ENCODE measurements at regions of chr6 and their contacts with region 1.

Region 1: DNA sequence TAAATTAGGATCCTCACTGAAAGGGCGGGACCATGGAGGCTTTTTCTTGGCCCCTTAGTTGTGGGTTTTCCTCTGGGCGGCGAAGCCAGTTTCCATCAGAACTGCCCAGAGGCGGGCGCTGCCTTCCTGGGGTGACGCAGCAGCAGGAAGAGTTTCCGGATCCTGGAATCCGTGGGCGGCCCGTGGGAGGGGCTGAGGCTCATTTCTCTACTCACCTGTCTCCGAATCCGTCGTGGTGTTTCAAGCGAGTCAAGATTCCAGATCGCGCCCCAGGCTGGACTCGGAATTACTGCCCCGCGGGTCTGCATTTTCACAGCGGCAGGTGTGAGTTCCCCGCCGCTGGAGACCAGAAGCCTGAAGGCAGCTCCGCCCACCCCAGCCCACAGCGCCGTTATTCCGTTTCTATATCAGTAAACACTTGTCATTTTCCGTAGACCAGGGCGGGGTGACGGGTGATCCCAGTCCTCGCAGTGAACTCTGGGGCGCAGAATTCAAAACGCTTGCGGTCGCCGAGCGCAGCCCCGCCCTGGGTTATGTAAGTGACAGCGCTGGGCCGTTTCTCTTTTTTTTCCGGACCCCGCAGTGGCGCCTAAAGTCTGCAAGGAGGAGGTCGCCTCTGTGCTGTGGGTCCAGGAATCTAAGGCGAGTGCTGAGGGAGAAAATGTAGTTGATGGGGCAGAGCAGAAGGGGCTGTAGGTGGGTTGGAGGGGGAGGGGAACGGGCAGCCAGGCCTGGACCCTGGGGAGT is 27.2 kb upstream of the POU5F1 start:
- DNase-seq: peak in 1 of 2 experiments; percentile 73
- H3K4me3 ChIP-seq: peak overlapping the region; percentile 43 to 74 (median 70)
- H3K27ac ChIP-seq: no peak overlapping the region
- H3K4me1 ChIP-seq: peaks cover 0 to 6% (median 5%) of the 10 kb centered on the region in 4 experiments; a peak in 6 of 7 replicates
- H3K27me3 ChIP-seq: no peaks in the 10 kb centered on the region
- CTCF ChIP-seq: peak in 1 of 3 experiments; percentile 3; a peak in 1 of 4 replicates
- EP300 ChIP-seq: no peak
- POLR2A ChIP-seq: no peak
- RAD21 ChIP-seq: peak; percentile 1 to 11; a peak in 1 of 4 replicates

Region 2: DNA sequence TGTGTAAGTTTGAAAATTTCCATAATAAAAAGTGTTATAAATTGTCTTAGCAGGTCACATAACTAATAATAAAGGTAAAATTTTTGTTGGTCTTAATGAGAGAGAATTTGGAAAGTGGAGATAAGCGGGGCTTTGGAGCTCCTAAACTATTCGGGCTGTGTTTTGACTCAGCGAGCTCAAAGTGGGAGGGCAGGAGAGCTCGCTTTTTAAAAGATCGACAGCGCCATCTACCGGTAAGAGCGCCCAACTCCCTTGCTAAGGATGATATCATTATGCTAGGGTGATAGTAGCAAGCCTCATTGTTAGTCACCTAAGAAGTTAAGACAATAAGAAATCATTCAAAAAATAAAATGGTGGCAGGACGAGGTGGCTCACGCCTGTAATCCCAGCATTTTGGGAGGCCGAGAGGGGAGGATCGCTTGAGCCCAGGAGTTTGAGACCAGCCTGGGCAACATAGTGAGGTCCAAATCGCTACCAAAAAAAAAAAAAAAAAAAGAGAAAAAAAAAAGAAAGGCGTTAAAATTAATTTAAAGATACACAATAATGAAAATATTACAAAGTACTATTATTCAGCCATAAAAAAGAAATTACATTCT is 110.1 kb before region 1 on chr6:
- CTCF ChIA-PET with region 1: interaction called, 12 read pairs
- POLR2A ChIA-PET with region 1: no interaction called
- DNase-seq: peak in 1 of 2 experiments; percentile 87
- H3K4me3 ChIP-seq: no peak overlapping the region
- H3K27ac ChIP-seq: no peak overlapping the region
- H3K4me1 ChIP-seq: no peaks in the 10 kb centered on the region; a peak in 1 of 7 replicates
- H3K27me3 ChIP-seq: no peaks in the 10 kb centered on the region
- CTCF ChIP-seq: peak; percentile 47 to 70 (median 67)
- EP300 ChIP-seq: no peak
- POLR2A ChIP-seq: no peak
- RAD21 ChIP-seq: peak; percentile 81 to 83

Region 3: GRCh38 chr6:31143148-31143547 is 54.6 kb before region 1 on chr6:
- CTCF ChIA-PET with region 1: interaction called, 66 read pairs
- POLR2A ChIA-PET with region 1: interaction called, 2,251 read pairs
- DNase-seq: no peak
- H3K4me3 ChIP-seq: no peak overlapping the region
- H3K27ac ChIP-seq: no peak overlapping the region
- H3K4me1 ChIP-seq: peaks cover 0 to 16% (median 11%) of the 10 kb centered on the region in 4 experiments; a peak in 6 of 7 replicates
- H3K27me3 ChIP-seq: 0 out of 7 replicates have a peak, but pooled peaks cover 0 to 2% (median 0%) of the 10 kb centered on the region in 4 experiments
- CTCF ChIP-seq: no peak
- EP300 ChIP-seq: no peak
- POLR2A ChIP-seq: no peak
- RAD21 ChIP-seq: no peak

Region 4: GRCh38 chr6:31158140-31158862 is 39.4 kb before region 1 on chr6 and contains the start of gene TCF19:
- CTCF ChIA-PET with region 1: interaction called, 45 read pairs
- POLR2A ChIA-PET with region 1: interaction called, 2,251 read pairs
- DNase-seq: peak; percentile 97 to 99
- H3K4me3 ChIP-seq: peak within 1 kb of the TSS; percentile 62 to 76 (median 68)
- H3K27ac ChIP-seq: no peak within 1 kb of the TSS; the same call in 1 of the 2 replicates
- H3K4me1 ChIP-seq: peaks cover 0 to 24% (median 18%) of the 10 kb centered on the region in 4 experiments; a peak in 6 of 7 replicates
- H3K27me3 ChIP-seq: no peaks in the 10 kb centered on the region
- CTCF ChIP-seq: no peak
- EP300 ChIP-seq: no peak
- POLR2A ChIP-seq: no peak
- RAD21 ChIP-seq: no peak
- total RNA-seq, gene TCF19: 10.0 and 11.0 TPM in 2 replicates

Region 5: DNA sequence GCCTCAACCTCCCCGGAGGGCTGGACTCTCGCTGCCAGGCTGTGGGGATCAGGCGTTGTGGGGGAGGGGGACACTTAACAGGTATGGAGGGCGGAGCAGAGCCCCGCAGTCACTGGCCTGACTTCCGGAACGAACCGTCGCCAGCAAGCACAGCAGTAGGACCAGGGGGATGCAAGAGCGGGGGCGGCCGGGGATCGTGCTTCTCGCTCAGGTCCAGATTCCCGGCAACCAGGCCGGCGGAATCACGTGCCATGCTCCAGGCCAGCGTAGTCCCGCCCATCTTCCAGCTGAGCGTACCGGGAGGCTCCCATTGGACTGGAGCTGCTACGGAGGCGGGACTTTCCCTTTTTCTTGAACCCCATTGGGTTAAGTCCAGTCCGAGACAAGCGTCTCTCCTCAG is 17.2 kb before region 1 on chr6:
- CTCF ChIA-PET with region 1: interaction called, 36 read pairs
- POLR2A ChIA-PET with region 1: interaction called, 2,251 read pairs
- DNase-seq: peak in 1 of 2 experiments; percentile 81
- H3K4me3 ChIP-seq: no peak overlapping the region
- H3K27ac ChIP-seq: no peak overlapping the region
- H3K4me1 ChIP-seq: peaks cover 0 to 9% (median 6%) of the 10 kb centered on the region in 4 experiments; a peak in 4 of 7 replicates
- H3K27me3 ChIP-seq: no peaks in the 10 kb centered on the region
- CTCF ChIP-seq: no peak
- EP300 ChIP-seq: no peak
- POLR2A ChIP-seq: no peak
- RAD21 ChIP-seq: no peak

Region 6: GRCh38 chr6:31366693-31367470 is 169.2 kb after region 1 on chr6:
- CTCF ChIA-PET with region 1: interaction called, 103 read pairs
- POLR2A ChIA-PET with region 1: interaction called, 9 read pairs
- DNase-seq: peak; percentile 86 to 91
- H3K4me3 ChIP-seq: peak overlapping the region in 2 of 4 experiments; percentile 30 to 45; a peak in 4 of 8 replicates
- H3K27ac ChIP-seq: no peak overlapping the region
- H3K4me1 ChIP-seq: no peaks in the 10 kb centered on the region; a peak in 1 of 7 replicates
- H3K27me3 ChIP-seq: no peaks in the 10 kb centered on the region; a peak in 2 of 7 replicates
- CTCF ChIP-seq: peak; percentile 96 to 99 (median 98)
- EP300 ChIP-seq: no peak
- POLR2A ChIP-seq: no peak
- RAD21 ChIP-seq: peak; percentile 97

Region 7: GRCh38 chr6:31441365-31442267 is 243.9 kb after region 1 on chr6:
- CTCF ChIA-PET with region 1: interaction called, 11 read pairs
- POLR2A ChIA-PET with region 1: no interaction called
- DNase-seq: peak; percentile 46 to 94
- H3K4me3 ChIP-seq: no peak overlapping the region
- H3K27ac ChIP-seq: no peak overlapping the region
- H3K4me1 ChIP-seq: peaks cover 0 to 8% (median 0%) of the 10 kb centered on the region in 4 experiments; a peak in 3 of 7 replicates
- H3K27me3 ChIP-seq: peaks cover 0 to 8% (median 0%) of the 10 kb centered on the region in 4 experiments; a peak in 3 of 7 replicates
- CTCF ChIP-seq: peak; percentile 87 to 91 (median 89)
- EP300 ChIP-seq: no peak
- POLR2A ChIP-seq: no peak
- RAD21 ChIP-seq: peak; percentile 84 to 86